HepG2 (cell line): ENCODE measurements at regions of chr9 and their contacts with region 1.

Region 1: DNA sequence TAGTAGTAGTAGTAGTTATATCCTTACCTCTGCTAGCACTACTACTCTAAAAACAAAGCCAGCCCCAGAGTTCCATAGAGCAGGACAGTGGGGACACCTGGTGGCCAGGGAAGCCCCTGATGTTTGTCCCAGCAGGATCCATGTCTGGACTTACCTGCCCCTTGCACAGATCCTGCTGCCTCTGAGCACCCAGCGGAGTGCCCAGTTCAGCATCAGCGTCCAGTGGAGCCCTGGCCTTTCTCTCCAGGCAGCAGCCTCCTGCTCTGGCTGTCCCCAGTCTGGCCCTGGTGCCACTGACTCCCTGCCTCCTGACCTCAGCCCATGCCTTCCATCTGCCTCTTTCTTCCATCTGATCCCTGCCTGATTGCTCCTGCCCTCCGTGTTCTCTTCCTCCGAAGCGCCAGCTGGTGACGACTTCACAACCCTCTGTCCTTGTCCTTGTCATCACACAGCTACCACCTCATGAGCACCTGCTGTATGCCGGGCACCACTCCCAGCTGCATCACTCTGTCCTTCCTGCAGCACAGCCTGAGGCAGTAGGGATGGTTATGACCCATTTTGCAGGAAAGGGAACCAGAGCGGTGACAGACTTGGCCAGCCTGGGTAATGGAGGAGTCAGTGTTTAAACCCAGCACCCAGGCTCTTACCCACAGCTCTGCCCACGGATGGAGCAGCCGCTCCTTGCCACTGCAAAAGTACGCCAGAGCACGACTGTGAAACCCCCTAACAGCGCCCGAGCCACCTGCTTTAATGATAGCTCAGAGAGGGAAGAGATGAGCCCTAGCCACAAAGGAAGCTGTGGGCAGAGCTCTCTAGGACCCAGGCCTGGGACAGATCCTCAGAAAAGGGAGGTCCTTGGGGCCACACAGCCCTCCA is 11.5 kb downstream of the SARDH start:
- DNase-seq: peak; percentile 60
- ATAC-seq: peak; percentile 86
- H3K4me3 ChIP-seq: no peak overlapping the region
- H3K27ac ChIP-seq: no peak overlapping the region
- H3K4me1 ChIP-seq: peaks cover 13% of the 10 kb centered on the region
- H3K27me3 ChIP-seq: no peaks in the 10 kb centered on the region
- CTCF ChIP-seq: peak; percentile 83
- EP300 ChIP-seq: no peak
- POLR2A ChIP-seq: no peak
- RAD21 ChIP-seq: peak; percentile 77

Region 2: GRCh38 chr9:133532937-133533668 is 193.5 kb before region 1 on chr9:
- CTCF ChIA-PET with region 1: interaction called, 19 read pairs
- POLR2A ChIA-PET with region 1: interaction called, 3 read pairs
- in situ Hi-C with region 1: loop called (anchors 25 kb)
- intact Hi-C with region 1: no loop called
- DNase-seq: peak; percentile 75
- ATAC-seq: peak; percentile 69
- H3K4me3 ChIP-seq: peak overlapping the region in 1 of 3 experiments; percentile 72; a peak in 2 of 6 replicates
- H3K27ac ChIP-seq: no peak overlapping the region
- H3K4me1 ChIP-seq: peaks cover 38% of the 10 kb centered on the region
- H3K27me3 ChIP-seq: peaks cover 17 to 42% of the 10 kb centered on the region in 2 experiments; a peak in 4 of 5 replicates
- CTCF ChIP-seq: peak; percentile 95
- EP300 ChIP-seq: no peak
- POLR2A ChIP-seq: no peak
- RAD21 ChIP-seq: peak; percentile 78

Region 3: GRCh38 chr9:133589454-133590227 is 137.0 kb before region 1 on chr9:
- CTCF ChIA-PET with region 1: no interaction called
- POLR2A ChIA-PET with region 1: no interaction called
- in situ Hi-C with region 1: no loop called
- intact Hi-C with region 1: loop called (anchors 5 kb)
- DNase-seq: no peak
- ATAC-seq: no peak
- H3K4me3 ChIP-seq: no peak overlapping the region
- H3K27ac ChIP-seq: no peak overlapping the region
- H3K4me1 ChIP-seq: no peaks in the 10 kb centered on the region
- H3K27me3 ChIP-seq: peaks cover 14 to 71% of the 10 kb centered on the region in 2 experiments
- CTCF ChIP-seq: peak; percentile 75
- EP300 ChIP-seq: no peak
- POLR2A ChIP-seq: no peak
- RAD21 ChIP-seq: peak; percentile 41

Region 4: GRCh38 chr9:133742849-133743444 is 16.3 kb after region 1 on chr9:
- CTCF ChIA-PET with region 1: interaction called, 5 read pairs
- POLR2A ChIA-PET with region 1: interaction called, 22 read pairs
- in situ Hi-C with region 1: no loop called
- intact Hi-C with region 1: no loop called
- DNase-seq: peak; percentile 83
- ATAC-seq: peak; percentile 52
- H3K4me3 ChIP-seq: no peak overlapping the region
- H3K27ac ChIP-seq: peak overlapping the region; percentile 17
- H3K4me1 ChIP-seq: peaks cover 85% of the 10 kb centered on the region
- H3K27me3 ChIP-seq: no peaks in the 10 kb centered on the region
- CTCF ChIP-seq: peak; percentile 98
- EP300 ChIP-seq: no peak
- POLR2A ChIP-seq: no peak
- RAD21 ChIP-seq: peak; percentile 89

Region 5: DNA sequence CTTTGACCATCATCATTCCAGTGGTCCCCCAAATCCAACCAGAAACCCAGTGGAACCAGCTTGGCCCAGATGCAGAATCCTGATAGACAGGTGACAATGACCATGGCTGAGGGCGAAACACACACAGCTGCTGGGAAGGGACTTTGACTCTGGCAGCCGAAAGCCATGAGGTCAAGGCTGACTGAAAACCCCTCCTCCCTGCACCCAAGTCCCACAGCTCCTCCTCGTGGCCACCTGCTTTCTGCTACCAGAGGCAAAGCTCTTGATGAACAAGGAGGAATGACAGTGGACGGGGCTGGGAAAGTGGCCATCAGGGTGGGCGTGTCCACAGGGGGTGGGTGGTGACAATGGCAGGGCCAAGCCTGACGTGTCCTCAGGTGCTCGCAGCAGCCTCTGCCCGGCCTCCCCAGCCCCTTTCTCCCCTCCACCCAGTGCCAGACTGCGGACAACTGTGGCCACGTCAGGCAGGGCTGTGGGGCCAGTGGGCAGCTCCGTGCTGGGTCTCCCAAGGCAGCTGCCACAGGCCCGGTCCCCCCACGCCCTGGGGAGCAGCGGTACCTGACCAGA is 42.3 kb after region 1 on chr9:
- CTCF ChIA-PET with region 1: interaction called, 11 read pairs
- POLR2A ChIA-PET with region 1: interaction called, 5 read pairs
- in situ Hi-C with region 1: no loop called
- intact Hi-C with region 1: loop called (anchors 1 kb)
- DNase-seq: peak; percentile 83
- ATAC-seq: peak; percentile 84
- H3K4me3 ChIP-seq: no peak overlapping the region
- H3K27ac ChIP-seq: peak overlapping the region; percentile 36
- H3K4me1 ChIP-seq: peaks cover 17% of the 10 kb centered on the region
- H3K27me3 ChIP-seq: no peaks in the 10 kb centered on the region
- CTCF ChIP-seq: peak; percentile 99
- EP300 ChIP-seq: peak in 1 of 2 experiments; percentile 65; a peak in 2 of 4 replicates
- POLR2A ChIP-seq: no peak
- RAD21 ChIP-seq: peak; percentile 95